Naive thymus-derived CD4-positive, alpha-beta T cell (primary cell): ENCODE measurements at regions of chr3 and their contacts with region 1.

Region 1: GRCh38 chr3:27880969-27881892 is 159.1 kb upstream of the EOMES start:
- DNase-seq: peak in 8 of 9 donors; percentile 24 to 75 (median 62)
- ATAC-seq: peak; percentile 87
- H3K4me3 ChIP-seq: peak overlapping the region; percentile 43
- H3K4me3 Mint-ChIP-seq: peak overlapping the region; percentile 82 to 94 (median 89)
- H3K27ac ChIP-seq: peak overlapping the region; percentile 75
- H3K27ac Mint-ChIP-seq: peak overlapping the region; percentile 91 to 99 (median 97)
- H3K4me1 ChIP-seq: peaks cover 28 to 47% of the 10 kb centered on the region in 2 donors
- H3K4me1 Mint-ChIP-seq: peaks cover 39 to 85% (median 73%) of the 10 kb centered on the region in 7 donors
- H3K27me3 ChIP-seq: no peaks in the 10 kb centered on the region
- H3K27me3 Mint-ChIP-seq: peaks cover 0 to 4% (median 0%) of the 10 kb centered on the region in 5 donors

Region 2: DNA sequence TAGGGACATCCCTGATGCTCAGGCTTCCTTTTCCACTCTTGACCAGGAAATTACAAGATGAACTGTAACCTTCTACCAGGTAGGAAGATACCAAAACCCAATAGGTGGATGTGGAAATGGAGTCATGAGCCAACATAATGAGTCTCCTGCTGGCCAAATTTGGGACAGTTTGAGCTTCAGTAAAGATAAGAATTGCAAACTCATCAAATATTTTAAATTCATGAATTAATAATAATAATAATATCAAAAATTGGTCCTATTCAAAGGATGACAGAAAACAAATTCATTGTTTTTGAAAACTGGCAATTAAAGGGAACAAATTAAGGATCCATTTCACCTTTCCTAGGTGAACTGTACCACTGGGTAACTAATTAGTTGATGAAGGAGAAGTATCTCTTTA is 821.7 kb before region 1 on chr3:
- CTCF ChIA-PET with region 1: no interaction called
- POLR2A ChIA-PET with region 1: no interaction called
- intact Hi-C with region 1: no loop called
- DNase-seq: no peak
- ATAC-seq: no peak
- H3K4me3 ChIP-seq: no peak overlapping the region
- H3K4me3 Mint-ChIP-seq: no peak overlapping the region
- H3K27ac ChIP-seq: no peak overlapping the region
- H3K27ac Mint-ChIP-seq: no peak overlapping the region
- H3K4me1 ChIP-seq: no peaks in the 10 kb centered on the region
- H3K4me1 Mint-ChIP-seq: no peaks in the 10 kb centered on the region
- H3K27me3 ChIP-seq: no peaks in the 10 kb centered on the region
- H3K27me3 Mint-ChIP-seq: peaks cover 0 to 10% (median 6%) of the 10 kb centered on the region in 5 donors

Region 3: DNA sequence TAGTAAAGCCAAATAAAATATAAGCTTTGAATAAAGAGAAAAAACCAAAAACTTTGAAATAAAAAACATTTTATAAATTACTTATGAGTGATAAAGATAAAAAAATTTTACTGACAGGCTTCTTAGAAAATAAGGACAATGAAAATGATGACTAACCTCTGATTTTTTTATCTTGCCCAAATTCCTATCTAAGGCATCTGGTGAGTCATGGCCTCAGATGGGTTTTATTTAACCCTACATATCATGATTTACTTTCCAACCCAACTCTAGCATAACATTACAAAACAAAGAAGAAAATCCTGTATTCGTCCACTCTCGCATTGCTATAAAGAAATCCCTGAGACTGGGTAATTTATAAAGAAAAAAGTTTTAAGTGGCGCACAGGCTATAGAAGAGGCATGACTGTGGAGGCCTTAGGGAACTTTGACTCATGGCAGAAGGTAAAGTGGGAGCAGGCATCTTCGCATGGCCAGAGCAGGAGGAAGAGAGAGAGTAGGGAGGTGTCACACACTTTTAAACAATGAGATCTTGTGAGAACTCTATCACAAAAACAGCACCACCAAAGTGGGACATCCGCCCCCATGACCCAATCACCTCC is 664.2 kb before region 1 on chr3:
- CTCF ChIA-PET with region 1: no interaction called
- POLR2A ChIA-PET with region 1: no interaction called
- intact Hi-C with region 1: no loop called
- DNase-seq: no peak
- ATAC-seq: no peak
- H3K4me3 ChIP-seq: no peak overlapping the region
- H3K4me3 Mint-ChIP-seq: no peak overlapping the region
- H3K27ac ChIP-seq: no peak overlapping the region
- H3K27ac Mint-ChIP-seq: no peak overlapping the region
- H3K4me1 ChIP-seq: no peaks in the 10 kb centered on the region
- H3K4me1 Mint-ChIP-seq: no peaks in the 10 kb centered on the region
- H3K27me3 ChIP-seq: no peaks in the 10 kb centered on the region
- H3K27me3 Mint-ChIP-seq: peaks cover 0 to 4% (median 0%) of the 10 kb centered on the region in 5 donors

Region 4: GRCh38 chr3:27900316-27900715 is 19.1 kb after region 1 on chr3:
- CTCF ChIA-PET with region 1: no interaction called
- POLR2A ChIA-PET with region 1: interaction called, 6 read pairs
- intact Hi-C with region 1: loop called (anchors 1 kb)
- DNase-seq: peak in 1 of 9 donors; percentile 25
- ATAC-seq: peak; percentile 63
- H3K4me3 ChIP-seq: no peak overlapping the region
- H3K4me3 Mint-ChIP-seq: peak overlapping the region in 2 of 10 donors; percentile 10 to 25
- H3K27ac ChIP-seq: no peak overlapping the region
- H3K27ac Mint-ChIP-seq: peak overlapping the region in 6 of 9 donors; percentile 2 to 76 (median 52)
- H3K4me1 ChIP-seq: peaks cover 24 to 37% of the 10 kb centered on the region in 2 donors
- H3K4me1 Mint-ChIP-seq: peaks cover 19 to 63% (median 49%) of the 10 kb centered on the region in 7 donors
- H3K27me3 ChIP-seq: no peaks in the 10 kb centered on the region
- H3K27me3 Mint-ChIP-seq: no peaks in the 10 kb centered on the region

Region 5: GRCh38 chr3:28241221-28242160 is 360.3 kb after region 1 on chr3 and contains the start of gene CMC1:
- CTCF ChIA-PET with region 1: no interaction called
- POLR2A ChIA-PET with region 1: interaction called, 6 read pairs
- intact Hi-C with region 1: loop called (anchors 1 to 5 kb)
- DNase-seq: peak; percentile 69 to 93 (median 83)
- ATAC-seq: peak; percentile 95
- H3K4me3 ChIP-seq: peak within 1 kb of the TSS; percentile 71
- H3K4me3 Mint-ChIP-seq: peak within 1 kb of the TSS; percentile 88 to 97 (median 96)
- H3K27ac ChIP-seq: peak within 1 kb of the TSS; percentile 71
- H3K27ac Mint-ChIP-seq: peak within 1 kb of the TSS; percentile 85 to 96 (median 94)
- H3K4me1 ChIP-seq: peaks cover 16 to 40% of the 10 kb centered on the region in 2 donors
- H3K4me1 Mint-ChIP-seq: peaks cover 32 to 77% (median 60%) of the 10 kb centered on the region in 7 donors
- H3K27me3 ChIP-seq: no peaks in the 10 kb centered on the region
- H3K27me3 Mint-ChIP-seq: no peaks in the 10 kb centered on the region
- total RNA-seq, gene CMC1: 11.0 to 25.1 (median 13.9) TPM